ENCODE measurements at regions of chr2 and their contacts with region 1.

Region 1: DNA sequence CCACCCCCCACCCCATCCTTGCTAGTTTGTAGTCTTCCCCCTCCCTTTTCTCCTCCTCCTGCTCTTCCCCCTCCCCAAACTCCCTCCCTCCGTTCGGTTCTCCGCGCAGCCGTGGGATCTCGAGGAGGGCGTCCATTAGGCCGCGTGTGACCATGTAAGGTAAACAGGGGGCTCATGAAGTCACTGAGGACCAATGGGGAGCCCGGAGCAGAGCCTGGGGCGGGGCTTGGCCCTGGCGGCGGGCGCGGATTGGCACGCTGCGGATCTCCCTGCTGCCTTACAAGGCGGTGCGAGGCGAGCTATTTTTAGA is 246 bp upstream of the KLF7 start:
- DNase-seq: peak; percentile 99
- ATAC-seq: peak; percentile 92
- H3K4me3 Mint-ChIP-seq: peak overlapping the region; percentile 97
- H3K27ac Mint-ChIP-seq: no peak overlapping the region
- H3K4me1 Mint-ChIP-seq: peaks cover 58% of the 10 kb centered on the region
- H3K27me3 Mint-ChIP-seq: peaks cover 2% of the 10 kb centered on the region
- CTCF ChIP-seq: no peak

Region 2: DNA sequence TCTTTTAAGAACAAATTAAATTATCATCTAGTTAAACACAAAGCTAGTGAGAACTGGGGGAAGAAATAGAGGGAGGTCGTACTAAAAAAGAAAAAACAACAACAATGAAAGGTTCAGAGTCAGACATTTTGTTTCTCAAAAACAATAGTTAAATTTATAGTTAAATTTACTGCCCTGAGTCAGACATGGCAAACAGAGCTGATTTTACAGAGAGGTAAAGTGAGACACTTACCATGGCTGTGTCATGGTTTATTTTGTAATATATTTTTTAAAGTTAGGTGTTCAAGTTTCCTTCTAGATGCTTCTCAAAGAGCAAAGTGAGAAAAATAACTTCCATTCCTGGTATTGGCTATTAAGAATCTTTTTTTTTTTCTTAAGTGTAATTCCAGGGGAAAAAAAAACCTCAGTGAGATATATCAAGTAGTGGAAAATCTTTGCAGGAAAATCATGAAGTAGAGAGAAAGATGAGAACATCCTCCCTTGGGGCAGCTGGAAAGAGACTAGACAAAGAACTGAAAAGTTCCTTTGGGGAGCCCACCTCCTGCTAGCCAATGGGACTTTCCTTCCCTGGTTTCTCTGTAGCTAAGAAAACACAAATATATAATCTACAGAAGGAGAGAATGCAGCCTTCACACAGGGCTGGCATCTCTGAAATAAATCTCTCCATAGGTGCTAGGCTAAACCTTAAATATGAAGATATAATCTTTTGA is 12.6 kb before region 1 on chr2:
- CTCF ChIA-PET with region 1: interaction called, 4 read pairs
- POLR2A ChIA-PET with region 1: interaction called, 13 read pairs
- DNase-seq: no peak
- ATAC-seq: no peak
- H3K4me3 Mint-ChIP-seq: no peak overlapping the region
- H3K27ac Mint-ChIP-seq: peak overlapping the region; percentile 87
- H3K4me1 Mint-ChIP-seq: peaks cover 84% of the 10 kb centered on the region
- H3K27me3 Mint-ChIP-seq: no peaks in the 10 kb centered on the region
- CTCF ChIP-seq: no peak

Region 3: GRCh38 chr2:207227062-207227748 is 61.2 kb after region 1 on chr2:
- CTCF ChIA-PET with region 1: interaction called, 3 read pairs
- POLR2A ChIA-PET with region 1: interaction called, 17 read pairs
- DNase-seq: peak; percentile 71
- ATAC-seq: peak; percentile 75
- H3K4me3 Mint-ChIP-seq: peak overlapping the region; percentile 58
- H3K27ac Mint-ChIP-seq: peak overlapping the region; percentile 94
- H3K4me1 Mint-ChIP-seq: peaks cover 77% of the 10 kb centered on the region
- H3K27me3 Mint-ChIP-seq: peaks cover 22% of the 10 kb centered on the region
- CTCF ChIP-seq: no peak

Region 4: DNA sequence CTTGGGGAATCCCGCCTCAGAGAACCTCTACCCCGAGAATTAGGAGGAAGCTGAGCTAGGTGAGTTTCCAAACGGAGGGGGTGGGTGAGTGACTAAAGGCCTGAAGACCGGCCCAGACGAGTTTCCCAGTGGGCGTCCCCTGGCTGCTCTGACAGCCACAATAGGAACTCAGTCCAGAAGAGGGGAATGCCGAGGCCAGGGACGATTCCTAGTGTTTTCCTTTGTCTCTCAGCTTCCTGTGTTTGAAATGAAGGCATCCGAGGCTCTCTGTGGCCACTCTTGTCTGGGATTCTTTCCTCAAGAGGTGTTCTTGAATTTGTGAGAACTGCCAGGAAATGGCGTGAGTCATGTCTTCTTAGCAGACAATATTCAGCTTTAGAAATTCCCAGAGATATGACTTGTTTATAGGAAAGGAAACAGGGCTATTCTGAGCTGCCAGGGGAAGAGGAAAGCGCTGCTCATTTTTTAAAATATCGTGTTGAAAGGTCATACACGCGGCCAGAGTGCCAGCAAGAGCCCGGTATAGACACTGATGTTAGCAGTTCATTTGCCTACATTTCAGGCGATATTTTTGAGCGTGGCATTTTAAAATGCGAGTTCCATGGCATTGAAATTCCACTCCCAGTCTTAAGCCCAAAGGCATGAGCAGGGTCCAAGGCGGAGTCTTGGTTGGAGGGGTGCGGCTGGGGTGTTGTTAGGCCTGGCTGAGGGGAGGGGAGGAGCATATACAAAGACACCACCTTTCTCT is 168.8 kb after region 1 on chr2:
- CTCF ChIA-PET with region 1: no interaction called
- POLR2A ChIA-PET with region 1: interaction called, 12 read pairs
- DNase-seq: peak; percentile 79
- ATAC-seq: peak; percentile 96
- H3K4me3 Mint-ChIP-seq: peak overlapping the region; percentile 61
- H3K27ac Mint-ChIP-seq: peak overlapping the region; percentile 100
- H3K4me1 Mint-ChIP-seq: peaks cover 60% of the 10 kb centered on the region
- H3K27me3 Mint-ChIP-seq: no peaks in the 10 kb centered on the region
- CTCF ChIP-seq: no peak

Region 5: GRCh38 chr2:207473049-207473930 is 307.3 kb after region 1 on chr2:
- CTCF ChIA-PET with region 1: interaction called, 18 read pairs
- POLR2A ChIA-PET with region 1: no interaction called
- DNase-seq: peak; percentile 40
- ATAC-seq: peak; percentile 89
- H3K4me3 Mint-ChIP-seq: no peak overlapping the region
- H3K27ac Mint-ChIP-seq: peak overlapping the region; percentile 64
- H3K4me1 Mint-ChIP-seq: peaks cover 46% of the 10 kb centered on the region
- H3K27me3 Mint-ChIP-seq: no peaks in the 10 kb centered on the region
- CTCF ChIP-seq: no peak